Heart left ventricle (tissue), 16 donors: ENCODE measurements at regions of chr10 and their contacts with region 1.

Region 1: GRCh38 chr10:29735596-29736318 is 101.0 kb upstream of the SVIL start:
- DNase-seq: peak; percentile 84 to 93 (median 88)
- ATAC-seq: peak; percentile 73 to 91 (median 90)
- H3K4me3 ChIP-seq: peak overlapping the region; percentile 42 to 94 (median 85)
- H3K27ac ChIP-seq: peak overlapping the region; percentile 85 to 98 (median 93)
- H3K4me1 ChIP-seq: peaks cover 0 to 31% (median 17%) of the 10 kb centered on the region in 12 donors
- H3K27me3 ChIP-seq: no peaks in the 10 kb centered on the region
- CTCF ChIP-seq: peak; percentile 87 to 97 (median 94)
- POLR2A ChIP-seq: peak in 1 of 2 donors; percentile 33

Region 2: GRCh38 chr10:29517352-29517923 is 218.3 kb before region 1 on chr10:
- intact Hi-C with region 1: loop called in 1 of 10 experiments (anchors 10 kb)
- DNase-seq: no peak
- ATAC-seq: peak in 3 of 4 donors; percentile 3 to 39 (median 31)
- H3K4me3 ChIP-seq: no peak overlapping the region
- H3K27ac ChIP-seq: peak overlapping the region; percentile 2 to 90 (median 82)
- H3K4me1 ChIP-seq: peaks cover 0 to 38% (median 13%) of the 10 kb centered on the region in 12 donors
- H3K27me3 ChIP-seq: no peaks in the 10 kb centered on the region
- CTCF ChIP-seq: peak; percentile 21 to 60 (median 43)
- POLR2A ChIP-seq: no peak

Region 3: DNA sequence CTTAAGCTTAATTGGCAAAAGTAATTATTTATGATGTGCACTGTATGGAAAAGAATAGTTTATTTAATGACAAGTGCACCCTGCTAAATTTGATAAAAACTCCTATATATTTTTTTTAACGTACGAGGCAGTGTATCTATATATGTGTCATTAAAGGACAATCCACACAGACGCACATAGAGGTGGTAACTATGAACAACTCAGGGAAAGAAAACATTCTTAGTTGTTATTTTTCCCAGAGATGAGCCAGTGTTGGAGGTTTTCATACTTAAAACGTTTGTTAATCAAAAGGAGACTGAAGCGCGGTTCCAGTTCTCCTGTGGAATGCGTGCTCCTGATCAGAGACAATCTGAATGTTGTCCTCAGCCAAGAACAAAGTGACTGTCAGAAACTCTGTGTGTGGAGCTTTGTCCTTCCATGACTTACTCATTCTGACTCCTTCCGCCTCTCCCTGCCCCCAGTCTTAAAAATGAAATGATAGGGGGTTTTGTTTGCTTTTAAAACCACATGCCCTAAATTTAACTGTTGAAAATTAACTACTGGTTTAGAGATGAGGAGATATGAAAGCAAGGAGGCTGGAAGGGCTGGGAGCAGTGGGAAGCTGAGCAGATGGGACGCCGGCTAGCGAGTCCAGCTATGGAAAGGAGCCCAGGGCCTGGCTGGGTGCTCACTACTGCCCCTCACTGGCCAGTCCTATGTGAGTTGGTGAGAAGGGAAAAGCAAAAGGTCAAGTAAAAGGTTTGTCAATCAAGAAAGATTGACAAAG is 200.6 kb before region 1 on chr10:
- intact Hi-C with region 1: loop called in 2 of 10 experiments (anchors 10 kb)
- DNase-seq: peak in 4 of 5 donors; percentile 53 to 74 (median 59)
- ATAC-seq: peak; percentile 68 to 82 (median 72)
- H3K4me3 ChIP-seq: peak overlapping the region in 5 of 12 donors; percentile 6 to 30 (median 15)
- H3K27ac ChIP-seq: peak overlapping the region; percentile 61 to 87 (median 76)
- H3K4me1 ChIP-seq: peaks cover 0 to 55% (median 21%) of the 10 kb centered on the region in 12 donors
- H3K27me3 ChIP-seq: no peaks in the 10 kb centered on the region
- CTCF ChIP-seq: peak; percentile 36 to 72 (median 62)
- POLR2A ChIP-seq: no peak

Region 4: GRCh38 chr10:29618341-29619171 is 117.2 kb before region 1 on chr10:
- intact Hi-C with region 1: loop called in 1 of 10 experiments (anchors 10 kb)
- DNase-seq: peak in 2 of 5 donors; percentile 59 to 60
- ATAC-seq: peak in 3 of 4 donors; percentile 43 to 59 (median 59)
- H3K4me3 ChIP-seq: peak overlapping the region in 6 of 12 donors; percentile 1 to 34 (median 10)
- H3K27ac ChIP-seq: peak overlapping the region; percentile 1 to 82 (median 56)
- H3K4me1 ChIP-seq: peaks cover 0 to 68% (median 44%) of the 10 kb centered on the region in 12 donors
- H3K27me3 ChIP-seq: no peaks in the 10 kb centered on the region
- CTCF ChIP-seq: no peak
- POLR2A ChIP-seq: no peak

Region 5: GRCh38 chr10:29691564-29692072 is 44.1 kb before region 1 on chr10:
- intact Hi-C with region 1: loop called in 1 of 10 experiments (anchors 5 kb)
- DNase-seq: peak in 3 of 5 donors; percentile 27 to 51 (median 44)
- ATAC-seq: peak; percentile 67 to 92 (median 81)
- H3K4me3 ChIP-seq: peak overlapping the region in 8 of 12 donors; percentile 4 to 27 (median 16)
- H3K27ac ChIP-seq: peak overlapping the region in 10 of 12 donors; percentile 4 to 81 (median 63)
- H3K4me1 ChIP-seq: peaks cover 0 to 40% (median 19%) of the 10 kb centered on the region in 12 donors
- H3K27me3 ChIP-seq: no peaks in the 10 kb centered on the region
- CTCF ChIP-seq: no peak
- POLR2A ChIP-seq: no peak

Region 6: DNA sequence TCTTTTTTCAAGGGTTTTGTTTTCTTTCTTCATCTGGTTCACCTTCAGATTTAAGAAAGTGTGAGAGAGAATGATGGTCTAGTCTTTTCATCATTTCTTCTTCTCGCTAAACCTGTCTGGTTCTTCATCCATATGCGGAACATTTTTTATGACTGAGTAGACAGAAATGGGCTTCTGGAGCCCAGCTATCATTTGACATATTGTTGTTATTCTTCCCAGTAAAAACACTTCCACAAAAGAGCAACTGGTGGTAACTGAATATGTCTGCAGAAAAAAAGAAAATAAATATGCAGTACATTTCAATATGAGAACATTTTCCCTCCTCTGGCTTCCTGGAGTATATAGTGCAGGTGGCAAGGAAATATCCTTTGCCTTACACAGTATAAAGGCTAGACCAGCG is 114.1 kb after region 1 on chr10:
- intact Hi-C with region 1: loop called in 9 of 10 experiments (anchors 5 to 10 kb)
- DNase-seq: no peak
- ATAC-seq: no peak
- H3K4me3 ChIP-seq: peak overlapping the region in 4 of 12 donors; percentile 18 to 41 (median 20)
- H3K27ac ChIP-seq: peak overlapping the region in 8 of 12 donors; percentile 15 to 79 (median 46)
- H3K4me1 ChIP-seq: peaks cover 0 to 22% (median 8%) of the 10 kb centered on the region in 12 donors
- H3K27me3 ChIP-seq: no peaks in the 10 kb centered on the region
- CTCF ChIP-seq: no peak
- POLR2A ChIP-seq: no peak